ENCODE measurements at regions of chr6 and their contacts with region 1.

Region 1: GRCh38 chr6:30515932-30516753 is 26.8 kb downstream of the HLA-E start:
- DNase-seq: peak; percentile 94

Region 2: DNA sequence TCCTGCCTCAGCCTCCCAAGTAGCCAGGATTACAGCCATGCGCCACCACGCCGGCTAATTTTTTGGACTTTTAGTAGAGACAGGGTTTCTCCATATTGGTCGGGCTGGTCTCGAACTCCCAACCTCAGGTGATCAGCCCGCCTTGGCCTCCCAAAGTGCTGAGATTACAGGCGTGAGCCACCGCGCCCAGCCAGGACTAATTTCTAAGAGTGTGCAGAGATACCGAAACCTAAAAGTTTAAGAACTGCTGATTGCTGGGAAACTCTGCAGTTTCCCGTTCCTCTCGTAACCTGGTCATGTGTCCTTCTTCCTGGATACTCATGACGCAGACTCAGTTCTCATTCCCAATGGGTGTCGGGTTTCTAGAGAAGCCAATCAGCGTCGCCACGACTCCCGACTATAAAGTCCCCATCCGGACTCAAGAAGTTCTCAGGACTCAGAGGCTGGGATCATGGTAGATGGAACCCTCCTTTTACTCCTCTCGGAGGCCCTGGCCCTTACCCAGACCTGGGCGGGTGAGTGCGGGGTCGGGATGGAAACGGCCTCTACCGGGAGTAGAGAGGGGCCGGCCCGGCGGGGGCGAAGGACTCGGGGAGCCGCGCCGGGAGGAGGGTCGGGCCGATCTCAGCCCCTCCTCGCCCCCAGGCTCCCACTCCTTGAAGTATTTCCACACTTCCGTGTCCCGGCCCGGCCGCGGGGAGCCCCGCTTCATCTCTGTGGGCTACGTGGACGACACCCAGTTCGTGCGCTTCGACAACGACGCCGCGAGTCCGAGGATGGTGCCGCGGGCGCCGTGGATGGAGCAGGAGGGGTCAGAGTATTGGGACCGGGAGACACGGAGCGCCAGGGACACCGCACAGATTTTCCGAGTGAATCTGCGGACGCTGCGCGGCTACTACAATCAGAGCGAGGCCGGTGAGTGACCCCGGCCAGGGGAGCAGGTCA is 26.8 kb before region 1 on chr6 and contains the start of gene HLA-E:
- intact Hi-C with region 1: loop called (anchors 2 kb)
- DNase-seq: peak; percentile 93
- total RNA-seq, gene HLA-E: 126 TPM